CD14-positive monocyte (primary cell): ENCODE measurements at regions of chr6 and their contacts with region 1.

Region 1: DNA sequence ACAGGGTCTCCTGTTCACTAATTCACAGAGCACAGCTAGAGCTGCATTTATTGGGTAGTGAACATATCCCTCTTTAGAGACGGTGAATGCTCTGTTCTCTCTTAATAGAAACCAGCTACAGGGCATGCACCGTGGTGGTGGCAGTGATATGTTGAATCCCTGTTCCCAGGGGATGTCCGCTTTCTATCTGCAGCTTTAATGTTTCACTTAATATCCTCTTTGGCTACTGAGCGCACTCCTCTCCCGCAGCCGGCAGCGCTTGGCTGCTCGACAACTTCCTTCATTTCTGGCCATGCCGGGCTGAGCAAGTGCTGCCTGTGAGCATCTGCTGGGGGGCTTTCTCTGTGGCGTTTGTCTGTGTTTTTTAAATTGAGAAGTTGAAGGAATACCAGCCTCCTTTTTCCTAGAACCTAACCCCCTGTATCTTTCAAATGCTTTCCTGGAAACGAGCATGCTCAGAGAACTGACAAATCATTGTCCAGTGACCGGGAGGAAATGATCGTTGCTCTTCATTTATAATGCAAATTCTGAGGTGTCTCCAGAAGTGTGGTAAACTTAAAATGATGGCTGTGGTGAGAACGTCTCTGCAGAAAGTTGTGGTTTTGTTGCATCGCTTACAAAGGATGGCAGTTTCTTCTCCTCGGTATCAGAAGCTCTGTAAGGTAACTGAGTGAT is 297.9 kb downstream of the UTRN start:
- DNase-seq: peak; percentile 34 to 44 (median 37)
- H3K4me3 ChIP-seq: peak overlapping the region; percentile 3 to 66 (median 59)
- H3K4me3 Mint-ChIP-seq: peak overlapping the region; percentile 74 to 92
- H3K27ac ChIP-seq: peak overlapping the region; percentile 30 to 45
- H3K27ac Mint-ChIP-seq: peak overlapping the region in 6 of 7 donors; percentile 10 to 64 (median 42)
- H3K4me1 ChIP-seq: peaks cover 17 to 25% of the 10 kb centered on the region in 2 donors
- H3K4me1 Mint-ChIP-seq: peaks cover 25% of the 10 kb centered on the region
- H3K27me3 ChIP-seq: no peaks in the 10 kb centered on the region
- H3K27me3 Mint-ChIP-seq: peaks cover 0 to 2% (median 1%) of the 10 kb centered on the region in 3 donors
- CTCF ChIP-seq: no peak

Region 2: GRCh38 chr6:144482142-144482541 is 100.9 kb before region 1 on chr6:
- intact Hi-C with region 1: no loop called
- DNase-seq: peak; percentile 27 to 37 (median 36)
- H3K4me3 ChIP-seq: no peak overlapping the region
- H3K4me3 Mint-ChIP-seq: no peak overlapping the region
- H3K27ac ChIP-seq: no peak overlapping the region
- H3K27ac Mint-ChIP-seq: peak overlapping the region in 1 of 7 donors; percentile 27
- H3K4me1 ChIP-seq: no peaks in the 10 kb centered on the region
- H3K4me1 Mint-ChIP-seq: no peaks in the 10 kb centered on the region
- H3K27me3 ChIP-seq: no peaks in the 10 kb centered on the region
- H3K27me3 Mint-ChIP-seq: no peaks in the 10 kb centered on the region
- CTCF ChIP-seq: peak; percentile 76

Region 3: DNA sequence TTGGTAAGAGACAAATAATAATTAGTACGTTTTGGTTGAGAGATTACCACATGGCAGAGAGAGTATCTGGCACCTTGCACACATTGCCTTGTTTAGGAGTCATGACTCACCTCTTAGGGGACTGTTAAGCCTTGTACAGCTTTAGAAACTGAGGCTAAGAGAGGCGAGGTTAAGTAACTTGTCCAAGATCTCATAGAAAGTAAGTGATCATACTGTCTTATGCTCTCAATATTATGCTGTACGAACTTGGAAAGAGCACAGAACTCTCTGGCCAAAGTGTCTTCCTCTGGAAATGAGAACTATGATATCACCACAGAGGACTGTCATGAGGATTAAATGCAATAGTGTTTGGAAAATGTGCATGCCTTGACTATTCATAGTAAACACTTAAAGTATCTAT is 48.9 kb before region 1 on chr6:
- intact Hi-C with region 1: no loop called
- DNase-seq: no peak
- H3K4me3 ChIP-seq: no peak overlapping the region
- H3K4me3 Mint-ChIP-seq: no peak overlapping the region
- H3K27ac ChIP-seq: no peak overlapping the region
- H3K27ac Mint-ChIP-seq: no peak overlapping the region
- H3K4me1 ChIP-seq: no peaks in the 10 kb centered on the region
- H3K4me1 Mint-ChIP-seq: no peaks in the 10 kb centered on the region
- H3K27me3 ChIP-seq: no peaks in the 10 kb centered on the region
- H3K27me3 Mint-ChIP-seq: no peaks in the 10 kb centered on the region
- CTCF ChIP-seq: no peak

Region 4: GRCh38 chr6:145214570-145214969 is 631.5 kb after region 1 on chr6:
- intact Hi-C with region 1: loop called in 1 of 2 experiments (anchors 5 kb)
- DNase-seq: peak in 2 of 3 donors; percentile 1 to 3
- H3K4me3 ChIP-seq: no peak overlapping the region
- H3K4me3 Mint-ChIP-seq: no peak overlapping the region
- H3K27ac ChIP-seq: no peak overlapping the region
- H3K27ac Mint-ChIP-seq: no peak overlapping the region
- H3K4me1 ChIP-seq: no peaks in the 10 kb centered on the region
- H3K4me1 Mint-ChIP-seq: no peaks in the 10 kb centered on the region
- H3K27me3 ChIP-seq: no peaks in the 10 kb centered on the region
- H3K27me3 Mint-ChIP-seq: peaks cover 0 to 3% (median 2%) of the 10 kb centered on the region in 3 donors
- CTCF ChIP-seq: peak; percentile 65

Region 5: GRCh38 chr6:145633981-145634627 is 1051.0 kb after region 1 on chr6:
- intact Hi-C with region 1: loop called in 1 of 2 experiments (anchors 10 kb)
- DNase-seq: peak; percentile 44 to 56 (median 55)
- H3K4me3 ChIP-seq: no peak overlapping the region
- H3K4me3 Mint-ChIP-seq: no peak overlapping the region
- H3K27ac ChIP-seq: no peak overlapping the region
- H3K27ac Mint-ChIP-seq: no peak overlapping the region
- H3K4me1 ChIP-seq: peaks cover 0 to 3% of the 10 kb centered on the region in 2 donors
- H3K4me1 Mint-ChIP-seq: peaks cover 9% of the 10 kb centered on the region
- H3K27me3 ChIP-seq: no peaks in the 10 kb centered on the region
- H3K27me3 Mint-ChIP-seq: no peaks in the 10 kb centered on the region
- CTCF ChIP-seq: peak; percentile 92